ENCODE measurements at regions of chr12 and their contacts with region 1.

Region 1: GRCh38 chr12:107167756-107168155 is 74.4 kb upstream of the CRY1 start:
- DNase-seq: no peak
- H3K4me3 ChIP-seq: no peak overlapping the region
- H3K27ac ChIP-seq: no peak overlapping the region
- H3K4me1 ChIP-seq: peaks cover 0 to 3% (median 0%) of the 10 kb centered on the region in 4 experiments; a peak in 2 of 7 replicates
- H3K27me3 ChIP-seq: no peaks in the 10 kb centered on the region; a peak in 1 of 7 replicates
- CTCF ChIP-seq: no peak
- EP300 ChIP-seq: no peak
- POLR2A ChIP-seq: no peak
- RAD21 ChIP-seq: no peak

Region 2: GRCh38 chr12:107179871-107180270 is 12.1 kb after region 1 on chr12:
- CTCF ChIA-PET with region 1: interaction called, 11 read pairs
- POLR2A ChIA-PET with region 1: no interaction called
- DNase-seq: no peak
- H3K4me3 ChIP-seq: no peak overlapping the region
- H3K27ac ChIP-seq: no peak overlapping the region
- H3K4me1 ChIP-seq: no peaks in the 10 kb centered on the region
- H3K27me3 ChIP-seq: no peaks in the 10 kb centered on the region
- CTCF ChIP-seq: no peak
- EP300 ChIP-seq: no peak
- POLR2A ChIP-seq: no peak
- RAD21 ChIP-seq: no peak